ENCODE measurements at regions of chr16 and their contacts with region 1.

Region 1: DNA sequence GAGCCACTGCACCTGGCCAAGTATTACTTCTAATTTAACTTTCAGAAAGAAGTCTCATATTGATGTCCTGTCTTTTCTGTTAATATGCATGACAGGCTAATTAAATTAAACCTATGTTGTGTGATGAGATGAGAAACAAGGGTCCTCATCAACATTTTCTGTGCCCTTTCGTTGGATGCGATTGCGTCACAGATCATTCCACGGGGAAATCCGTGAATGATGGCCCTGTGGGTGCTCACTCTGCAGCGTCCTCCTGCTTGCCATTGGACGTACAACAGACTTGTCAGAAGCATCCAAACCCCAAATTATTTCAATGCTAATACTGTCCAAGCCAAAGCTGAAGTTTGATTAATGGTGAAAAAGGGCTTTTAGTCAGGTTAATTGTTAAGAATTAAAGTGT is 197.0 kb downstream of the MRTFB start:
- DNase-seq: no peak
- H3K4me3 ChIP-seq: no peak overlapping the region
- H3K27ac ChIP-seq: no peak overlapping the region
- H3K4me1 ChIP-seq: no peaks in the 10 kb centered on the region
- H3K27me3 ChIP-seq: no peaks in the 10 kb centered on the region
- CTCF ChIP-seq: no peak

Region 2: DNA sequence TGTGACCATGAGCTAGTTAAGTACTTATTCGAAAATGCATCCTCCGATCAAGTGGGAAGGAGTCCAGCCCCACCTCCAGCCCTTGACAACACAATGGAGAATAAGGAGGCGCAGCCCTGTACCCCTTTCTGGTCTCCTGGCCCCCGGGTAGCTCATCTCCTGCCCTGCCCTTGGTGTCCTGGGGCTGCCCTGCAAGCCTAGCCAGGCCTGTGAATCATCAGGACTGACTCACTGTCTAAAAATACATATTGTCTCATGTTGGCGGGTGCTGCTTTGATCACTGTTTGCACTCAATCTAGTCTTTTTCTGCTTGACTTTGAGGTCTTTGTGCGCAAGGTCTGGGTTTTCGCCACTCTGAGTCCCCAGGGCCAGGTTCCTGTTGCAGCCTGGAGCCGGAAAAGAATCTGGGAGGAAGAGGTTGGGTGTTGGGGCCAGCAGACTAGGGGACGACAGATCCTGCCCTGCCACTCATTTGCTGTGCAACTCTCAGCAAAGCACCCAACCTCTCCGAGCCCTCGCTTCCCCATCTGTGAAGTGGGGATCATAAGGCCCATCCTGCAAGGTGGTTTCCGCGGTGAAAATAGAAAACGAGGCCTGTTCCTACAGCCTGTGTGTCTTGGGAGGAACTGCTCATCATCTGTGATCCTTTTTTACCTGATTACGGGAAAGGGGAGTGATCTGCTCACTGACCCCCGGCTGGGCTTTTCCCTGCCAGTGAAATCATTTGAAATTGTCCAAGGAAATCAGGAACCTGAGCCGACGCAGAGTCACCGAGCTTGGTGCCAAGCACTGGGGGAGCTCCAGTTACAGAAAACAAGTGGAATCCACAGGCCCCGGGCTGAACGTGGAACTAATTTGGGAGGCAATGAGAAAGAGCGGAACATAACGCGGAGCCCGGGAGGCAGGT is 131.6 kb after region 1 on chr16:
- CTCF ChIA-PET with region 1: no interaction called
- POLR2A ChIA-PET with region 1: interaction called, 16 read pairs
- intact Hi-C with region 1: no loop called
- DNase-seq: no peak
- H3K4me3 ChIP-seq: no peak overlapping the region
- H3K27ac ChIP-seq: no peak overlapping the region
- H3K4me1 ChIP-seq: no peaks in the 10 kb centered on the region
- H3K27me3 ChIP-seq: no peaks in the 10 kb centered on the region
- CTCF ChIP-seq: no peak